CD14-positive monocyte (primary cell): ENCODE measurements at regions of chr16 and their contacts with region 1.

Region 1: GRCh38 chr16:69565671-69566239 is at the start of gene NFAT5:
- DNase-seq: peak; percentile 79 to 89 (median 84)
- H3K4me3 ChIP-seq: peak within 1 kb of the TSS; percentile 66 to 96 (median 73)
- H3K4me3 Mint-ChIP-seq: peak within 1 kb of the TSS; percentile 96 to 99
- H3K27ac ChIP-seq: peak within 1 kb of the TSS; percentile 87 to 98
- H3K27ac Mint-ChIP-seq: peak within 1 kb of the TSS; percentile 93 to 97 (median 95)
- H3K4me1 ChIP-seq: peaks cover 28 to 42% of the 10 kb centered on the region in 2 donors
- H3K4me1 Mint-ChIP-seq: peaks cover 42% of the 10 kb centered on the region
- H3K27me3 ChIP-seq: no peaks in the 10 kb centered on the region
- H3K27me3 Mint-ChIP-seq: peaks cover 0 to 2% (median 1%) of the 10 kb centered on the region in 3 donors
- CTCF ChIP-seq: no peak
- polyA plus RNA-seq, gene NFAT5: 2.4 to 6.9 (median 2.5) TPM

Region 2: DNA sequence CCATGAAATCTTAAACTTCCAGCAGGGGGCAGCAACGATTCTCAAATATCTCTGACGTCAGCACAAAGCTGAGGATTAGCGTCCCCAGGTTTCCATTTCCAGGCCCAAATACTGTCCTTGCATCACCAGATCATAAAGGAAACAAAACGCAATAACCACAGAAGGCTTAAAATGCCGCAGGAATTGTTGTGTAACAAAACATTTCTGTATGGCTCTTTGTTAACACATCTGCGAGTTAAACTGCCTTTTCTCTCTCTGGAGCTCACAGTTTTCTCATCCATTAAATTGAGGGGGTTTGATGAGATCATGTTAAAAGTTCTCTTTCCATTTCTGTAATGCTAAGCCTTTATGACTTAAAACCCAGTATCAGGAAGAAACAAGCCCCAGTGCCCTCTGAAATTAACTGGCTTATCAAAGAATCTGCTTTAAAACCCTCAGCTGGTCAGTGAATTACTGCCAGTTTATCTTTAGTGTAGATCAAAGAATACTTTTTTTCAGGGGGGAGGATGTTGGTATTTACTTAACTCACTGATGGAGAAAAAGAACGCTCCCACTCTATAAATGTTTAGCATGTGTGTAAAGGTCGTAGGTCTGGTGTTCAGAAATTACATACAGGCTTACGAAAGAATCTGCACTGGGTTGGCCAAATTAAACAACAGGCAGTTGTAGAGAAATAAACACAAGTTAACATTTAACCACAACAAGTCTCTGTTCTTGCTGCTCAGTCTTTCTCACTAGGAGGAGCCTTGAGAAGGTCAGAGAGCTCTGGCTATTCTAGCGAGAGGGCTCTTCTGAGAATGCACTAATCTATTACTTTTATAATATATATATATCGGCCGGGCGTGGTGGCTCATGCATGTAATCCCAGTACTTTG is 169.3 kb before region 1 on chr16:
- intact Hi-C with region 1: loop called (anchors 5 to 10 kb)
- DNase-seq: peak; percentile 90 to 95 (median 95)
- H3K4me3 ChIP-seq: peak overlapping the region in 2 of 3 experiments; percentile 14 to 54
- H3K4me3 Mint-ChIP-seq: peak overlapping the region in 1 of 2 donors; percentile 71
- H3K27ac ChIP-seq: peak overlapping the region in 1 of 2 donors; percentile 71
- H3K27ac Mint-ChIP-seq: peak overlapping the region; percentile 59 to 87 (median 68)
- H3K4me1 ChIP-seq: peaks cover 22 to 25% of the 10 kb centered on the region in 2 donors
- H3K4me1 Mint-ChIP-seq: peaks cover 22% of the 10 kb centered on the region
- H3K27me3 ChIP-seq: peaks cover 14 to 30% of the 10 kb centered on the region in 2 donors
- H3K27me3 Mint-ChIP-seq: peaks cover 28 to 41% (median 34%) of the 10 kb centered on the region in 3 donors
- CTCF ChIP-seq: peak; percentile 9

Region 3: DNA sequence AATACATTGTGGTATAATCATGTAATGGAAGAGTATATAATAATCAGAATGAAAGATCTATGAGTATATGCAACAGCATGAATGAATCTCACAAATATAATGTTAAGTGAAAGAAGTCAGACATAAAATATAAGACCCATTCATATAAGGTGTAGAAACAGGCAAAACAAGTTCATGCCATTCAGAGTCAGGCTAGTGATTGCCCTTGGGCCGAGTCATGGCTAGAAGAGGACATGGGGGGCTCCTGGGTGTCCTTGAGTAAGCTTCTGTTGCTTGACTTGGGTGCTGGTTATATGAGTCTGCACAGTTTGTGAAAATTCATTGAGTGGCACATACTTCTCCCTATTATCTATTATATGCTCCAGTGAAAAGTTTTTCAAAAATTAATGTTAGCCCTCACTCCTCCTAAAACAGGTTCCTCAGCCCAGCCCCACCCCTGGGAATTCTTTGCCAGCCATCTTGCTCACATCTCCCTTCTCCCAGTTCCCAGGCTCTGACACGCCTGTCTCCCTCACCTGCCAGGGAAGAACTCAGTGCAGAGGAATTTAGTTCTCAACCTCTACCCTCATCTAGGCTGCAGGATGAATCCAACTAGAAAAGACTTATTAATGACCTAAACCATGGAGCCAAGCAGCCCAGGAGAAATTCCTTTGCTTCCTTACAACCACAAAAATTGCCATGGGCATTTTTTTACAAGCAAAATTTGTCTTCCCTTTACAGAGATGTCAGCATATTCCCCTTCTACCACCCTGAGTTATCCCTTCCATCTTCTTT is 52.4 kb before region 1 on chr16:
- intact Hi-C with region 1: loop called in 1 of 2 experiments (anchors 5 kb)
- DNase-seq: no peak
- H3K4me3 ChIP-seq: peak overlapping the region in 1 of 3 experiments; percentile 12
- H3K4me3 Mint-ChIP-seq: peak overlapping the region in 1 of 2 donors; percentile 43
- H3K27ac ChIP-seq: peak overlapping the region in 1 of 2 donors; percentile 6
- H3K27ac Mint-ChIP-seq: peak overlapping the region; percentile 69 to 93 (median 88)
- H3K4me1 ChIP-seq: peaks cover 54 to 62% of the 10 kb centered on the region in 2 donors
- H3K4me1 Mint-ChIP-seq: peaks cover 49% of the 10 kb centered on the region
- H3K27me3 ChIP-seq: peaks cover 8 to 9% of the 10 kb centered on the region in 2 donors
- H3K27me3 Mint-ChIP-seq: peaks cover 16 to 24% (median 22%) of the 10 kb centered on the region in 3 donors
- CTCF ChIP-seq: no peak

Region 4: GRCh38 chr16:69532641-69533459 is 32.9 kb before region 1 on chr16:
- intact Hi-C with region 1: loop called in 1 of 2 experiments (anchors 5 kb)
- DNase-seq: no peak
- H3K4me3 ChIP-seq: no peak overlapping the region
- H3K4me3 Mint-ChIP-seq: peak overlapping the region in 1 of 2 donors; percentile 28
- H3K27ac ChIP-seq: no peak overlapping the region
- H3K27ac Mint-ChIP-seq: peak overlapping the region in 1 of 7 donors; percentile 33
- H3K4me1 ChIP-seq: peaks cover 28 to 32% of the 10 kb centered on the region in 2 donors
- H3K4me1 Mint-ChIP-seq: peaks cover 29% of the 10 kb centered on the region
- H3K27me3 ChIP-seq: peaks cover 6 to 13% of the 10 kb centered on the region in 2 donors
- H3K27me3 Mint-ChIP-seq: peaks cover 21 to 22% (median 22%) of the 10 kb centered on the region in 3 donors
- CTCF ChIP-seq: no peak

Region 5: GRCh38 chr16:69613378-69614154 is 47.8 kb after region 1 on chr16:
- intact Hi-C with region 1: no loop called
- DNase-seq: peak; percentile 9 to 48 (median 29)
- H3K4me3 ChIP-seq: no peak overlapping the region
- H3K4me3 Mint-ChIP-seq: no peak overlapping the region
- H3K27ac ChIP-seq: no peak overlapping the region
- H3K27ac Mint-ChIP-seq: peak overlapping the region in 3 of 7 donors; percentile 11 to 69 (median 41)
- H3K4me1 ChIP-seq: peaks cover 2 to 6% of the 10 kb centered on the region in 2 donors
- H3K4me1 Mint-ChIP-seq: peaks cover 13% of the 10 kb centered on the region
- H3K27me3 ChIP-seq: no peaks in the 10 kb centered on the region
- H3K27me3 Mint-ChIP-seq: no peaks in the 10 kb centered on the region
- CTCF ChIP-seq: no peak